GM12878 (cell line): ENCODE measurements at regions of chr1 and their contacts with region 1.

Region 1: GRCh38 chr1:36609241-36610027 is 126.7 kb upstream of the CSF3R start:
- DNase-seq: no peak
- ATAC-seq: peak; percentile 97
- H3K4me3 ChIP-seq: no peak overlapping the region
- H3K27ac ChIP-seq: no peak overlapping the region
- H3K4me1 ChIP-seq: no peaks in the 10 kb centered on the region
- H3K27me3 ChIP-seq: no peaks in the 10 kb centered on the region; a peak in 1 of 4 replicates
- CTCF ChIP-seq: peak; percentile 65 to 87 (median 86)
- EP300 ChIP-seq: no peak
- POLR2A ChIP-seq: no peak
- RAD21 ChIP-seq: peak; percentile 61

Region 2: GRCh38 chr1:36565576-36566501 is 43.6 kb before region 1 on chr1:
- CTCF ChIA-PET with region 1: no interaction called
- POLR2A ChIA-PET with region 1: no interaction called
- RAD21 ChIA-PET with region 1: no interaction called
- SMC1A ChIA-PET with region 1: no interaction called
- in situ Hi-C with region 1: no loop called
- intact Hi-C with region 1: no loop called
- DNase-seq: no peak
- ATAC-seq: no peak
- H3K4me3 ChIP-seq: no peak overlapping the region
- H3K27ac ChIP-seq: no peak overlapping the region
- H3K4me1 ChIP-seq: no peaks in the 10 kb centered on the region
- H3K27me3 ChIP-seq: no peaks in the 10 kb centered on the region; a peak in 2 of 4 replicates
- CTCF ChIP-seq: no peak
- EP300 ChIP-seq: no peak
- POLR2A ChIP-seq: no peak
- RAD21 ChIP-seq: no peak

Region 3: DNA sequence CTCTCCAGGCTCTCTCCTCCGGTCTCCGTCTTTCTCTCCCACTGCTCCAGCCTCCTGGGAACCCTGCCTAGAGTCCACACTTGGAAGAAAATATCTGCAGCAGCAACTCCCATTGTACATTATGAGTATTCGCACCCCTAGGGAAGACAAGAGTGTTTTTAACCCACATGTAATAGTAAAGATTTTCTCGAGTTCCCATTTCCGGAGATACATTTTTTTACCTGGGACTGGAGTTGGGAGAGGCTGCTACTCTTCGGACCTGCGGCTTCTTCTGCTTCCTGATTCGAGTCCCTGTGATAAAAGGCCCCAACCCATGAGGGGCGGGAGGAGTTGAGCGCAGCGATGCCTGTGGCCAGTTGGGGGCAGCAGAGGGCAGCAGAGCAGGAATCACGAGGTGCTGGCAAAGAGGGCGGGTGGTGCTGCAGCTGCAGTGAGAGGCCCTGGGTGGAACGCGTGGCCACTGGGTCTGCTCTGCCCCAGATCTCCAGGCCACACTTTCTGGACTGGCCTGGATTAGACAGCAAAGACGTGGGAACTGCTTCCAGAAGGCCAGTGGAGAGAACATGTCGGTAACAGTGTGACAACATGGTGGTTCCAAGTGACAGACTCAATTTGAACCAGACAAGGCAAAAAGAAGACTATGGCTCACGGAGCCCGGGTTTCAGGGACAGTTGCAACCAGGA is 94.2 kb after region 1 on chr1:
- CTCF ChIA-PET with region 1: no interaction called
- POLR2A ChIA-PET with region 1: no interaction called
- RAD21 ChIA-PET with region 1: no interaction called
- SMC1A ChIA-PET with region 1: no interaction called
- in situ Hi-C with region 1: no loop called
- intact Hi-C with region 1: loop called (anchors 5 kb)
- DNase-seq: peak; percentile 5
- ATAC-seq: peak; percentile 100
- H3K4me3 ChIP-seq: no peak overlapping the region
- H3K27ac ChIP-seq: no peak overlapping the region
- H3K4me1 ChIP-seq: no peaks in the 10 kb centered on the region
- H3K27me3 ChIP-seq: peaks cover 0 to under 1% of the 10 kb centered on the region in 2 experiments; a peak in 2 of 4 replicates
- CTCF ChIP-seq: peak; percentile 87 to 93 (median 91)
- EP300 ChIP-seq: no peak
- POLR2A ChIP-seq: no peak
- RAD21 ChIP-seq: peak; percentile 85

Region 4: GRCh38 chr1:36818771-36819170 is 209.3 kb after region 1 on chr1:
- CTCF ChIA-PET with region 1: no interaction called
- POLR2A ChIA-PET with region 1: no interaction called
- RAD21 ChIA-PET with region 1: no interaction called
- SMC1A ChIA-PET with region 1: no interaction called
- in situ Hi-C with region 1: no loop called
- intact Hi-C with region 1: no loop called
- DNase-seq: no peak
- ATAC-seq: no peak
- H3K4me3 ChIP-seq: no peak overlapping the region
- H3K27ac ChIP-seq: no peak overlapping the region
- H3K4me1 ChIP-seq: no peaks in the 10 kb centered on the region
- H3K27me3 ChIP-seq: peaks cover 2 to 5% of the 10 kb centered on the region in 2 experiments; a peak in 3 of 4 replicates
- CTCF ChIP-seq: no peak
- EP300 ChIP-seq: no peak
- POLR2A ChIP-seq: no peak
- RAD21 ChIP-seq: no peak